ENCODE measurements at regions of chr3 and their contacts with region 1.

Region 1: GRCh38 chr3:133674290-133674919 is 12.7 kb upstream of the TOPBP1 start:
- DNase-seq: no peak
- ATAC-seq: peak in 4 of 8 donors; percentile 19 to 55 (median 43)
- H3K4me3 ChIP-seq: peak overlapping the region in 9 of 10 donors; percentile 5 to 44 (median 31)
- H3K27ac ChIP-seq: no peak overlapping the region
- H3K4me1 ChIP-seq: peaks cover 0 to 7% (median 4%) of the 10 kb centered on the region in 9 donors
- H3K27me3 ChIP-seq: peaks cover 0 to 54% (median 32%) of the 10 kb centered on the region in 7 donors
- CTCF ChIP-seq: no peak

Region 2: DNA sequence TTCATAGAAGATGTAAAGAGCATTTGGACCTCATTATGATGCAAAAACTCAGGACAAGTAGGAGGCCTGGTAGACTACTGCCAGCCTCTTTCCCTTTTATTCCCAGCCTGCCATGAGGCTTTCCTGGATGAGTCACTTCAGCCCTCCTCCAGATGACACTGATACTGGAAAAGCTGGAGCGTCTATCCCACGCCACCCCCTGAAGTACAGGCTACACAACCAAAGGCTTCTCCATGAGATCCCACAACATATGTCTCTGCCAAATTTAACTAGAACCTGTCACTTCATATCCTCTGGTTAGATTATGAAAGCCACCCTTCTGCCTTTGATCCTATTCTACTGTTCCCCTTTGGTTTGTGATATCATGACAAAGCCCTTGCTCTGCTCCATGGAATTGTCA is 1583.5 kb before region 1 on chr3:
- intact Hi-C with region 1: no loop called
- DNase-seq: no peak
- ATAC-seq: no peak
- H3K4me3 ChIP-seq: no peak overlapping the region
- H3K27ac ChIP-seq: no peak overlapping the region
- H3K4me1 ChIP-seq: no peaks in the 10 kb centered on the region
- H3K27me3 ChIP-seq: peaks cover 0 to 9% (median 0%) of the 10 kb centered on the region in 7 donors
- CTCF ChIP-seq: no peak

Region 3: DNA sequence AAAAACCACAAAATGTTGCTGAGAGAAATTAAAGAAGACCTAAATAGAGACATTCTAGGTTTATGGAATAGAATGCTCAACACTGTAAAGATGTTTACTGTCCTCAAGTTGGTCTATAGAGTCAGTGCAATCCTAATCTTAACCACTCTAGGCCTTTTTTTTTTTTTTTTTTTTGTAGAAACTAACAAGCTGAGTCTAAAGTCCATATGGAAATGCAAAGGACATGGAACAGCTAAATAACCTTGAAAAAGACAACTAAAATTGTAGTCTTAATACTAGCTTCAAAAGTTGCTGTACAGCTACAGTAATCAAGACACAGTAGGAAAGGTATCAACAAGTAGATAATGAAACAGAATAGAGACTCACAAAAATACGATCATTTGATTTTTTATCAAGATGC is 68.1 kb before region 1 on chr3:
- intact Hi-C with region 1: loop called in 1 of 10 experiments (anchors 2 kb)
- DNase-seq: no peak
- ATAC-seq: no peak
- H3K4me3 ChIP-seq: no peak overlapping the region
- H3K27ac ChIP-seq: no peak overlapping the region
- H3K4me1 ChIP-seq: no peaks in the 10 kb centered on the region
- H3K27me3 ChIP-seq: no peaks in the 10 kb centered on the region
- CTCF ChIP-seq: no peak

Measured in heart right ventricle (tissue), 16 donors.